ENCODE measurements at regions of chr21 and their contacts with region 1.

Region 1: GRCh38 chr21:45643021-45643980 is at the start of gene PCBP3:
- DNase-seq: peak; percentile 89 to 99 (median 96)
- ATAC-seq: peak; percentile 78
- H3K4me3 ChIP-seq: peak within 1 kb of the TSS; percentile 24
- H3K4me3 Mint-ChIP-seq: peak within 1 kb of the TSS; percentile 77
- H3K27ac ChIP-seq: no peak within 1 kb of the TSS
- H3K27ac Mint-ChIP-seq: peak within 1 kb of the TSS; percentile 97
- H3K4me1 ChIP-seq: peaks cover 41% of the 10 kb centered on the region
- H3K4me1 Mint-ChIP-seq: peaks cover 53% of the 10 kb centered on the region
- H3K27me3 ChIP-seq: peaks cover 14 to 17% of the 10 kb centered on the region in 2 experiments
- H3K27me3 Mint-ChIP-seq: peaks cover 25% of the 10 kb centered on the region
- CTCF ChIP-seq: no peak
- total RNA-seq, gene PCBP3: 3.4 to 3.8 TPM

Region 2: DNA sequence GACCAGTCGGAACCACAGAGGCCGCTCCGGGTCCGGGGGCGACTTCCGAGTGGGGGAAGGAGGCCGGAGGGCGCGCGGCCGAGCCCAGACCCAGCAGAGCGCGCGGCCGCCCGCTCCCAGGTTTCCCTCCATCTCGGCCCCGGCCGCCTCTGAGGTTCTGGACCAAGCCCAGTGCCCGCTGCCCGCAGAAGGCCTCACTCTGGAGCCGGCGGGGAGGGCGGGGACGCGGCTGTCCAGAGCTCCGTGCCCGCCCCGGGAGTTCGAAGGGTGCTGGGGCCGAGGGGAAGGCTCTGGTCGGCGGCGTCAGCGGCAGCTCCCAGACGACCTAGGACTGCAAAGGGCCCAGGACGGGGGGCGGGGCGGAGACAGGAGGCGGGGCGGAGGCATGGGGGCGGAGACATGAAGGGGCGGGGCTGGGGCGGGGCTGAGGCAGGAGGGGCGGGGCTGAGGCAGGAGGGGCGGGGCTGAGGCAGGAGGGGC is 53.0 kb before region 1 on chr21:
- CTCF ChIA-PET with region 1: interaction called, 3 read pairs
- POLR2A ChIA-PET with region 1: no interaction called
- intact Hi-C with region 1: loop called (anchors 2 kb)
- DNase-seq: peak; percentile 65 to 86 (median 72)
- ATAC-seq: peak; percentile 57
- H3K4me3 ChIP-seq: peak overlapping the region; percentile 56
- H3K4me3 Mint-ChIP-seq: peak overlapping the region; percentile 58
- H3K27ac ChIP-seq: no peak overlapping the region
- H3K27ac Mint-ChIP-seq: no peak overlapping the region
- H3K4me1 ChIP-seq: peaks cover 36% of the 10 kb centered on the region
- H3K4me1 Mint-ChIP-seq: peaks cover 10% of the 10 kb centered on the region
- H3K27me3 ChIP-seq: peaks cover 0 to 7% of the 10 kb centered on the region in 2 experiments
- H3K27me3 Mint-ChIP-seq: peaks cover 10% of the 10 kb centered on the region
- CTCF ChIP-seq: no peak

Region 3: DNA sequence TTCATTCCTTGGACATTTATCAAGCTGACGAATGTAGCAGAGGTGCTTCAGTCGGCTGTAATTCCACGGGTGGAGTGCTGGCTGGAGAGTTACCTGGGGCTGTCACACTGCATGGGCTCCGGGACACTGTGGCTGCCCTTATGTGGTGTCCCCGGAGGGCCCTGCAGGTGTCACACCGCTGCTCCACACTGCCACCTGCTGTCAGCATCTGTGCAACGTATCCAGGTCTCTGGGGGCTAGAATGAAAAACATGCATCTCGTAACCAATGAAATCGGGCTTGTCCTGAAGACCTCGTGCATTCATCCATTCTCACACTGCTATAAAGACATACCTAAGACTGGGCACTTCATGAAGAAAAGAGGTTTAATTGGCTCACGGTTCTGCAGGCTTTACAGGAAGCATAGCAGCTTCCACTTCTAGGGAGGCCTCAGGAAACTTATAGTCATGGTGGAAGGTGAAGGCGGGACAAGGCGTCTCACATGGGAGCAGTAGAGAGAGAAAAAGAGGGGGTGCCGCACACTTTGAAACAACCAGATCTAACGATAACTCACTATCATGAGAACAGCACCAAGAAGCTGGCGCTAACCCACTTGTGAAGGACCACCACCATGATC is 46.5 kb before region 1 on chr21:
- CTCF ChIA-PET with region 1: interaction called, 3 read pairs
- POLR2A ChIA-PET with region 1: no interaction called
- intact Hi-C with region 1: loop called (anchors 2 kb)
- DNase-seq: peak; percentile 79 to 93 (median 84)
- ATAC-seq: peak; percentile 65
- H3K4me3 ChIP-seq: no peak overlapping the region
- H3K4me3 Mint-ChIP-seq: no peak overlapping the region
- H3K27ac ChIP-seq: no peak overlapping the region
- H3K27ac Mint-ChIP-seq: peak overlapping the region; percentile 67
- H3K4me1 ChIP-seq: peaks cover 26% of the 10 kb centered on the region
- H3K4me1 Mint-ChIP-seq: peaks cover 19% of the 10 kb centered on the region
- H3K27me3 ChIP-seq: no peaks in the 10 kb centered on the region
- H3K27me3 Mint-ChIP-seq: no peaks in the 10 kb centered on the region
- CTCF ChIP-seq: peak; percentile 87

Region 4: GRCh38 chr21:45615145-45615711 is 28.1 kb before region 1 on chr21:
- CTCF ChIA-PET with region 1: interaction called, 6 read pairs
- POLR2A ChIA-PET with region 1: no interaction called
- intact Hi-C with region 1: loop called in 1 of 2 experiments (anchors 1 kb)
- DNase-seq: peak; percentile 74 to 98 (median 88)
- ATAC-seq: peak; percentile 89
- H3K4me3 ChIP-seq: peak overlapping the region; percentile 56
- H3K4me3 Mint-ChIP-seq: peak overlapping the region; percentile 87
- H3K27ac ChIP-seq: peak overlapping the region; percentile 71 to 93
- H3K27ac Mint-ChIP-seq: peak overlapping the region; percentile 91
- H3K4me1 ChIP-seq: peaks cover 46% of the 10 kb centered on the region
- H3K4me1 Mint-ChIP-seq: peaks cover 42% of the 10 kb centered on the region
- H3K27me3 ChIP-seq: no peaks in the 10 kb centered on the region
- H3K27me3 Mint-ChIP-seq: no peaks in the 10 kb centered on the region
- CTCF ChIP-seq: no peak

Region 5: DNA sequence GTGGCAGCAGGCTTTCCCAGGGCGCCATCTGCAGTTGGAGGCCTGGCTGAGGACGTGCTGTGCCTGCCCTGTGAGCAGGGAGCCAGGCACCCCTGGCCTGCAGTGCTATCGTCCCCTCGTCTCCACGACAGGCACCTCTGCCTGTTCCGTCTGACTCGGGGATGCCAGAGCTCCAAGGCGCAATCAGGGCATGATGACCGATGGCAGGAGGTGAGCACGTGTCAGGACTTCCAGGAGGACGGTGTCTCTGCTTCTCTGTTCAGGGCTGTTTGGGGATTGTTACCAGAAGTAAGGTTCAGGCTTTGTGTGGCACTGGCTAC is 125.4 kb after region 1 on chr21:
- CTCF ChIA-PET with region 1: no interaction called
- POLR2A ChIA-PET with region 1: no interaction called
- intact Hi-C with region 1: loop called in 1 of 2 experiments (anchors 10 kb)
- DNase-seq: peak in 5 of 14 experiments; percentile 15 to 42 (median 27)
- ATAC-seq: no peak
- H3K4me3 ChIP-seq: no peak overlapping the region
- H3K4me3 Mint-ChIP-seq: peak overlapping the region; percentile 77
- H3K27ac ChIP-seq: no peak overlapping the region
- H3K27ac Mint-ChIP-seq: peak overlapping the region; percentile 94
- H3K4me1 ChIP-seq: peaks cover 30% of the 10 kb centered on the region
- H3K4me1 Mint-ChIP-seq: peaks cover 49% of the 10 kb centered on the region
- H3K27me3 ChIP-seq: no peaks in the 10 kb centered on the region
- H3K27me3 Mint-ChIP-seq: no peaks in the 10 kb centered on the region
- CTCF ChIP-seq: no peak

Region 6: GRCh38 chr21:45865106-45865832 is 222.0 kb after region 1 on chr21:
- CTCF ChIA-PET with region 1: no interaction called
- POLR2A ChIA-PET with region 1: no interaction called
- intact Hi-C with region 1: no loop called
- DNase-seq: no peak
- ATAC-seq: no peak
- H3K4me3 ChIP-seq: no peak overlapping the region
- H3K4me3 Mint-ChIP-seq: no peak overlapping the region
- H3K27ac ChIP-seq: no peak overlapping the region
- H3K27ac Mint-ChIP-seq: no peak overlapping the region
- H3K4me1 ChIP-seq: peaks cover 3% of the 10 kb centered on the region
- H3K4me1 Mint-ChIP-seq: no peaks in the 10 kb centered on the region
- H3K27me3 ChIP-seq: no peaks in the 10 kb centered on the region
- H3K27me3 Mint-ChIP-seq: no peaks in the 10 kb centered on the region
- CTCF ChIP-seq: no peak

Region 7: DNA sequence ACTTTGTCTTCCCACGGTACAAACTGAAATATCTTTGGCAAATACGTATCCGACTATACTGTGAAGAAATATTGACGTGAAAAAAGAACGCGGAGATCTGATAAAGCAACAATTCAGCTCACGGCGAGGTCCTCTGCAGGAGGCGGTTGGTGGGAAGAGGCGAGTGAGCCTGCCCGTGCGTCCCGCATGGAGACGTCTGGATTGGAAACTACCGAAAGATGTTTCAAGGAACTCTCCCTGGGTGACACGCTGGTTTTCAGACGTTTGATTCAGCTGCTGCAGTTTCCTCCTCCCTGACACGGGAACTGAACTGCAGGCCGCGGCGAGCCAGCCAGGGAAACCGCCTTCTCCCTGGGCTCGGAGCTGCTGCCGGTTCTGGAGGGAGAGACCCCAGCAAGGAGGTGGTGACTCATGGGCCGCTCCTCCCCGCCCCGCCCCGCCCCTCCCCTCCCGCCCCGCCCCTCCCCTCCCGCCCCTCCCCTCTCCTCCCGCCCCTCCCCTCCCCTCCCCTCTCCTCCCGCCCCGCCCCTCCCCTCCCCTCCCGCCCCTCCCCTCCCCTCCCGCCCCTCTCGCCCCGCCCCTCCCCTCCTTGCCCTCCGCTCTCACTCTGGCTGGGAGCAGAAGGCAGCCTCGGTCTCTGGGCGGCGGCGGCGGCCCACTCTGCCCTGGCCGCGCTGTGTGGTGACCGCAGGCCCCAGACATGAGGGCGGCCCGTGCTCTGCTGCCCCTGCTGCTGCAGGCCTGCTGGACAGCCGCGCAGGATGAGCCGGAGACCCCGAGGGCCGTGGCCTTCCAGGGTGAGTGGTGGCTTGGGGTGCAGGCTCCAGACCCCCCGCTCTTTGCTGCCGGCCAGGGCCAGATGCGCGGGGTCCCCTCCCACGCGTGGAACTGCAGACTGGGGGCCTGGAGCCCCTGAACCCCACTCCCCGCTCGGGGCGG is 338.1 kb after region 1 on chr21 and contains the start of gene COL6A1:
- CTCF ChIA-PET with region 1: no interaction called
- POLR2A ChIA-PET with region 1: no interaction called
- intact Hi-C with region 1: loop called in 1 of 2 experiments (anchors 5 kb)
- DNase-seq: peak; percentile 36 to 85 (median 54)
- ATAC-seq: peak; percentile 79
- H3K4me3 ChIP-seq: peak within 1 kb of the TSS; percentile 59
- H3K4me3 Mint-ChIP-seq: peak within 1 kb of the TSS; percentile 76
- H3K27ac ChIP-seq: no peak within 1 kb of the TSS
- H3K27ac Mint-ChIP-seq: no peak within 1 kb of the TSS
- H3K4me1 ChIP-seq: peaks cover 32% of the 10 kb centered on the region
- H3K4me1 Mint-ChIP-seq: peaks cover 5% of the 10 kb centered on the region
- H3K27me3 ChIP-seq: peaks cover 5 to 6% of the 10 kb centered on the region in 2 experiments
- H3K27me3 Mint-ChIP-seq: peaks cover 6% of the 10 kb centered on the region
- CTCF ChIP-seq: no peak
- total RNA-seq, gene COL6A1: 8.0 to 8.5 TPM

Region 8: GRCh38 chr21:46009951-46010705 is 366.8 kb after region 1 on chr21:
- CTCF ChIA-PET with region 1: no interaction called
- POLR2A ChIA-PET with region 1: no interaction called
- intact Hi-C with region 1: no loop called
- DNase-seq: peak in 1 of 14 experiments; percentile 3
- ATAC-seq: no peak
- H3K4me3 ChIP-seq: no peak overlapping the region
- H3K4me3 Mint-ChIP-seq: no peak overlapping the region
- H3K27ac ChIP-seq: no peak overlapping the region
- H3K27ac Mint-ChIP-seq: no peak overlapping the region
- H3K4me1 ChIP-seq: no peaks in the 10 kb centered on the region
- H3K4me1 Mint-ChIP-seq: no peaks in the 10 kb centered on the region
- H3K27me3 ChIP-seq: peaks cover 0 to 3% of the 10 kb centered on the region in 2 experiments
- H3K27me3 Mint-ChIP-seq: peaks cover 4% of the 10 kb centered on the region
- CTCF ChIP-seq: no peak

Measured in CD4-positive, alpha-beta T cell (primary cell).